Activated T-helper 2 cell treated with anti-CD3 and anti-CD28 coated beads, Interferon-gamma antibody, Interleukin-2, Interleukin-4, amounts not matched to agents 10 μg/mL and 5 μg/mL and 100 μg/mL, durations not matched to agents 14 hours and 24 hours and 36 hours (primary cell): ENCODE measurements at regions of chr15 and their contacts with region 1.

Region 1: GRCh38 chr15:63497642-63498467 is 6.5 kb upstream of the USP3 start:
- DNase-seq: peak; percentile 43
- H3K4me3 Mint-ChIP-seq: no peak overlapping the region
- H3K27ac Mint-ChIP-seq: no peak overlapping the region
- H3K4me1 Mint-ChIP-seq: peaks cover 61% of the 10 kb centered on the region
- H3K27me3 Mint-ChIP-seq: peaks cover 3% of the 10 kb centered on the region

Region 2: DNA sequence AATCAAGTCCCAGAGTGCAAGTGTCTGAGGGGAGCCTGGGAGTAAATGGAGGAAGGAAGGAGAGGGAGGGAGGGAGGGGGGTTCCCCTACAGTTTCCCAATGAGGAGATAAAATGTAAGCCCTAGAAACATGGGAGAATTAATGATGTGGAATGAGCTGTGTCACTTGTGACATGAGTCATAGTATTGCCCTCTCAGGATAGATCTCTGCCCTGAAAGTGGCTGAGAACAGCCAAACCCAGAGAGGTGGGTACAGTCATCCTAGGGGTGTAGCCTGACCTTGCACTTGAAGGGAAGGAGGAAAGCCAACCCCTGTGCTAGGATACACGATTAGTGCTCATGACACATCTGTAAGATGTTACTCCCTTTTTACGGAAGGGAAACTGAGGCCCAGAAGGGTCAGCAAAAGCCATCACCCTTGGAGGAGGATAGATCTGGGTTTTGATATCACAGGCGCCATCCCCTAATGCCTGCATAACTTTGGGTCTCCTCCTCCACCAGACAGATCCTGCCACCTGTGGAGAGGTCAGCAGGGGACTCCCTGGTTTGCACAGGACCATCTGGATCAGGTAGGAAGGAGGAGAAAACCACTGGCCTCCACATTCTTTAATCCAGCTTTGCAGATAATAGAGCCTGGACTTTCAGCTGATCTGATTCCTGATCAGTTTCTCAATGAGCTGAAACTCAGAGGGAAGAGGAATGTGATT is 16.6 kb before region 1 on chr15:
- intact Hi-C with region 1: loop called (anchors 2 kb)
- DNase-seq: no peak
- H3K4me3 Mint-ChIP-seq: no peak overlapping the region
- H3K27ac Mint-ChIP-seq: peak overlapping the region; percentile 42
- H3K4me1 Mint-ChIP-seq: peaks cover 53% of the 10 kb centered on the region
- H3K27me3 Mint-ChIP-seq: no peaks in the 10 kb centered on the region

Region 3: DNA sequence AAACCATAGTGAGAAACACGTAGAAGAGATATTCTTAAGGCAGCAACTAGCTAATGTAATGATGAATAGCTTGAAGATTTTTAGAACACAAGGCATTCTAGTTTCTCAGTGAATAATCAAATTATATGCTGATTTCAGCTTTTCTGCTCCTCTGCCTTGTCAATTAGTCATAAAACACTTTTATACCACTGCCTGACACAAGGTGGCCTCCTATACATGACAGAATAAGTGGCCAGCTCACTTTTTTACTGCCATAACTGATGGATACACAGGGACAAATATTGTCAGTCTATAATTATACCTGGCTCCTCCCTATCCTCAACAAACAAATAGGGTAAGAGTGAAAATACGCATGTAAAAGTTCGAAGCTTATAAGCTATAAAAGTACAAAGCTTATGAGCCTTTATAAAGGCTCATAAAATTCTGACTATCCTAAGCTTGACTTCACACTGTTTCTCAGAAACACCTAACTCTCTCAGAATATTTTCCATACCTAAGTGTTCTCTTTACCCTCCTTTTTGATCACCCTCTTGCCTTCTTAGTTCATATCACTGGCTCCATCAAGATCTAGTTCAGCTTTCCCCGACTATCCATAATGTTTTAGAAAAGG is 254.3 kb after region 1 on chr15:
- intact Hi-C with region 1: no loop called
- DNase-seq: peak; percentile 32
- H3K4me3 Mint-ChIP-seq: no peak overlapping the region
- H3K27ac Mint-ChIP-seq: no peak overlapping the region
- H3K4me1 Mint-ChIP-seq: peaks cover 5% of the 10 kb centered on the region
- H3K27me3 Mint-ChIP-seq: no peaks in the 10 kb centered on the region